Sigmoid colon (tissue), 7 donors: ENCODE measurements at regions of chr2 and their contacts with region 1.

Region 1: DNA sequence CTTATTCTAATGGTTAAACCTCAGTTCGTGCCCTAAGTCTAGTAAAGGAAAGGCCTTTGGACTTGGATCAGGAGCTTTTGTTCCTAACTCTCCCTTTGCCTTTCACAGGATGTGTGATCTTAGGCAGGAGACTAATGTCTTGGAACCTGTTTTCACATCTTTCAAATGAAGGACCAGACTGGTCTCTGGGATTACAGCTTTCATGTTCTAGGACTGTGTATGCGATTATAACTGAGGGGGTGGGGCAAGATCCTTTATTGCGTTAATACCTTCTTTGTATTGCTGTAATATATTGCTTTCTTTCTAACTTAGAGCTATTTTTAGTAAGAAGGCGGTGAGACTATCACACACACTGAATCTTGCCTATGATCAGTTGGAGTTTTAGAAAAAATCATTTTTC is 368.1 kb downstream of the RPRM start:
- DNase-seq: no peak
- H3K4me3 ChIP-seq: no peak overlapping the region
- H3K27ac ChIP-seq: peak overlapping the region in 3 of 4 donors; percentile 35 to 63 (median 36)
- H3K4me1 ChIP-seq: peaks cover 0 to 47% (median 36%) of the 10 kb centered on the region in 4 donors
- H3K27me3 ChIP-seq: no peaks in the 10 kb centered on the region
- CTCF ChIP-seq: no peak
- EP300 ChIP-seq: no peak
- POLR2A ChIP-seq: no peak

Region 2: GRCh38 chr2:152674334-152674733 is 436.2 kb before region 1 on chr2:
- intact Hi-C with region 1: no loop called
- DNase-seq: no peak
- H3K4me3 ChIP-seq: no peak overlapping the region
- H3K27ac ChIP-seq: no peak overlapping the region
- H3K4me1 ChIP-seq: no peaks in the 10 kb centered on the region
- H3K27me3 ChIP-seq: no peaks in the 10 kb centered on the region
- CTCF ChIP-seq: no peak
- EP300 ChIP-seq: no peak
- POLR2A ChIP-seq: no peak

Region 3: GRCh38 chr2:153074207-153074606 is 36.3 kb before region 1 on chr2:
- intact Hi-C with region 1: loop called (anchors 5 kb)
- DNase-seq: no peak
- H3K4me3 ChIP-seq: no peak overlapping the region
- H3K27ac ChIP-seq: no peak overlapping the region
- H3K4me1 ChIP-seq: peaks cover 0 to 26% (median 23%) of the 10 kb centered on the region in 4 donors
- H3K27me3 ChIP-seq: no peaks in the 10 kb centered on the region
- CTCF ChIP-seq: no peak
- EP300 ChIP-seq: no peak
- POLR2A ChIP-seq: no peak

Region 4: GRCh38 chr2:153133716-153134115 is 23.2 kb after region 1 on chr2:
- intact Hi-C with region 1: loop called (anchors 1 kb)
- DNase-seq: no peak
- H3K4me3 ChIP-seq: no peak overlapping the region
- H3K27ac ChIP-seq: no peak overlapping the region
- H3K4me1 ChIP-seq: peaks cover 0 to 18% (median 0%) of the 10 kb centered on the region in 4 donors
- H3K27me3 ChIP-seq: no peaks in the 10 kb centered on the region
- CTCF ChIP-seq: no peak
- EP300 ChIP-seq: no peak
- POLR2A ChIP-seq: no peak

Region 5: GRCh38 chr2:153311432-153311831 is 200.9 kb after region 1 on chr2:
- intact Hi-C with region 1: no loop called
- DNase-seq: peak; percentile 85
- H3K4me3 ChIP-seq: no peak overlapping the region
- H3K27ac ChIP-seq: no peak overlapping the region
- H3K4me1 ChIP-seq: peaks cover 0 to 9% (median 0%) of the 10 kb centered on the region in 4 donors
- H3K27me3 ChIP-seq: no peaks in the 10 kb centered on the region
- CTCF ChIP-seq: no peak
- EP300 ChIP-seq: no peak
- POLR2A ChIP-seq: no peak